CD4-positive, alpha-beta memory T cell (primary cell): ENCODE measurements at regions of chr10 and their contacts with region 1.

Region 1: GRCh38 chr10:73874267-73875138 is at the start of gene CAMK2G:
- DNase-seq: peak; percentile 83 to 87 (median 86)
- H3K4me3 ChIP-seq: peak within 1 kb of the TSS; percentile 61 to 72
- H3K4me3 Mint-ChIP-seq: peak within 1 kb of the TSS; percentile 86 to 97 (median 94)
- H3K27ac ChIP-seq: peak within 1 kb of the TSS; percentile 78
- H3K27ac Mint-ChIP-seq: peak within 1 kb of the TSS; percentile 87 to 99 (median 96)
- H3K4me1 ChIP-seq: peaks cover 65% of the 10 kb centered on the region
- H3K4me1 Mint-ChIP-seq: peaks cover 43 to 79% (median 58%) of the 10 kb centered on the region in 4 donors
- H3K27me3 ChIP-seq: no peaks in the 10 kb centered on the region
- H3K27me3 Mint-ChIP-seq: no peaks in the 10 kb centered on the region
- total RNA-seq, gene CAMK2G: 64.3 to 70.4 TPM

Region 2: DNA sequence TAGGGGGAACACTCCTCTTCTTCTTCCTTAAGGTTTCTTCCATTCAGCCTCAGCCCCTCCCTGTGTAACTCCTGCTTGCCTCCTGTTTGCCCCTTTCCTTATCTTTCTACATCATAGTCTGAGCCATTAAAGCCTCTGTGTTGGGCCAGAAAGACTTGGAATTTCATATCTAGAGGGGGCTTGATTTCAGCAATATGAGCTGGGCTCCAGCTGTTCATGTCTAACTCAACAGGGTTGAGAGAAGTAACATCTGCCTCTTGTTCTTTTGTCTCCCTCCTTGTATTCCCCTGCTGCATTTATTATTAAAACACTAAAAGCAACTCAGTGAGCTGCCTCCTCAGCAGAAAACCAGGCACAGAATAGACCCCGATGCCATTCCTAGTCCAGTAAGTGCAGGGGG is 112.7 kb before region 1 on chr10:
- CTCF ChIA-PET with region 1: no interaction called
- POLR2A ChIA-PET with region 1: no interaction called
- intact Hi-C with region 1: no loop called
- DNase-seq: no peak
- H3K4me3 ChIP-seq: no peak overlapping the region
- H3K4me3 Mint-ChIP-seq: no peak overlapping the region
- H3K27ac ChIP-seq: no peak overlapping the region
- H3K27ac Mint-ChIP-seq: peak overlapping the region; percentile 42 to 87 (median 74)
- H3K4me1 ChIP-seq: peaks cover 58% of the 10 kb centered on the region
- H3K4me1 Mint-ChIP-seq: peaks cover 25 to 53% (median 43%) of the 10 kb centered on the region in 4 donors
- H3K27me3 ChIP-seq: no peaks in the 10 kb centered on the region
- H3K27me3 Mint-ChIP-seq: no peaks in the 10 kb centered on the region

Region 3: DNA sequence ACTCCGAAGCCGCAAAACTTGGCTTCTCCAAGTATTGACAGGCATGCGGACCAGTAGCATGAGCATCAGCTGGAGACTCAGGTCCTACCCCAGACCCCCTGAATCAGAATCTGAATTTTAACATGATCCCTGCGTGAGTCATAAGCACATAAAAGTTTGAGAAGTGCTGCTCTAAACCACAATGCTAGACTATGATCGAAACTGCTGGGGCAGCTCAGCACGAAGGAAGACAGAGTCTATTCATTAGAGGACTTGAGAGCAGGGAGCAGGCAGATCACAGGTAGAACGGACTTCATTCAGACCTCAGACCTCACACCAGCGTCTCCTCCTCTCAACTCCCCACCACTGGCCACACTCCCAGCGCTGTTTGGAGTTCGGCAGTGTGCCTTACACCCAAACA is 17.1 kb before region 1 on chr10:
- CTCF ChIA-PET with region 1: interaction called, 612 read pairs
- POLR2A ChIA-PET with region 1: interaction called, 59 read pairs
- intact Hi-C with region 1: loop called (anchors 2 kb)
- DNase-seq: peak in 1 of 5 donors; percentile 58
- H3K4me3 ChIP-seq: no peak overlapping the region
- H3K4me3 Mint-ChIP-seq: peak overlapping the region; percentile 20 to 84 (median 39)
- H3K27ac ChIP-seq: no peak overlapping the region
- H3K27ac Mint-ChIP-seq: peak overlapping the region; percentile 81 to 91 (median 86)
- H3K4me1 ChIP-seq: peaks cover 53% of the 10 kb centered on the region
- H3K4me1 Mint-ChIP-seq: peaks cover 36 to 72% (median 50%) of the 10 kb centered on the region in 4 donors
- H3K27me3 ChIP-seq: no peaks in the 10 kb centered on the region
- H3K27me3 Mint-ChIP-seq: no peaks in the 10 kb centered on the region